ENCODE measurements at regions of chr11 and their contacts with region 1.

Region 1: DNA sequence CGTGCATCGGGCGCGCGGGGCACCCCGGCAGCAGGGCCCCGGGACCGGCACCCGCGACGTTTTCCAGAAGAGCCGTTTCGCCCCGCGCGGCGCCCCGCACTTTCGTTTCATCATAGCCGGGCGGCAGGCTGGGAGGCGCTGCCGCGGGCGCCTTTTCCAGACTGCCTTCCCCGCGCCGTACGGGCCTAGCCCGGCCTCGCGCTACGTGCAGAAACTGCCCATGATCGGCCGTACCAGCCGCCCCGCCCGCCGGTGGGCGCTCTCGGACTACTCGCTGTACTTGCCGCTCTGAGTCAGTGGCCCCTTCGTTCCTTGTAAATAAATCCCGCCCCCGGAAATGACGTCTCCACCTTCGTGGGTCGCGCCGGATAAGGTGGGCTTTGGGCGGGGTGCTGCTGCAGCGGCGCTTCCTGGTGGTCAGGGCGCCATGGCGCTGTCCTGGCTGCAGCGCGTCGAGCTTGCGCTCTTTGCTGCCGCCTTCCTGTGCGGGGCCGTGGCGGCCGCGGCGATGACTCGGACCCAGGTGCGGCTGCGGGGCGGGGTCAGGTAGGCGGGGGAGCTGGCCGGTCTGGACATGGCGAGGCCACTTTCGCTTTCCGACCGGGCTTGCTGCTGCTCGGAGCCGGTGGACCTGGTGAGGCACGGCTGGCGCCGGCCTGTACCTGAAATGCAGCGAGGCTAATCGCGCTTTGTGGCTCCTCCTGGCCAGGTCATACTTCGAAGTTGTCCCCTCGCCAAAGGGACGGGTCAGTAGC is at the start of gene TMEM179B:
- DNase-seq: peak; percentile 98
- H3K4me3 Mint-ChIP-seq: peak within 1 kb of the TSS; percentile 90
- H3K27ac Mint-ChIP-seq: peak within 1 kb of the TSS; percentile 93
- H3K4me1 Mint-ChIP-seq: peaks cover 15% of the 10 kb centered on the region
- H3K27me3 Mint-ChIP-seq: no peaks in the 10 kb centered on the region
- CTCF ChIP-seq: peak; percentile 40
- total RNA-seq, gene TMEM179B: 45.1 and 47.8 TPM in 2 replicates

Region 2: DNA sequence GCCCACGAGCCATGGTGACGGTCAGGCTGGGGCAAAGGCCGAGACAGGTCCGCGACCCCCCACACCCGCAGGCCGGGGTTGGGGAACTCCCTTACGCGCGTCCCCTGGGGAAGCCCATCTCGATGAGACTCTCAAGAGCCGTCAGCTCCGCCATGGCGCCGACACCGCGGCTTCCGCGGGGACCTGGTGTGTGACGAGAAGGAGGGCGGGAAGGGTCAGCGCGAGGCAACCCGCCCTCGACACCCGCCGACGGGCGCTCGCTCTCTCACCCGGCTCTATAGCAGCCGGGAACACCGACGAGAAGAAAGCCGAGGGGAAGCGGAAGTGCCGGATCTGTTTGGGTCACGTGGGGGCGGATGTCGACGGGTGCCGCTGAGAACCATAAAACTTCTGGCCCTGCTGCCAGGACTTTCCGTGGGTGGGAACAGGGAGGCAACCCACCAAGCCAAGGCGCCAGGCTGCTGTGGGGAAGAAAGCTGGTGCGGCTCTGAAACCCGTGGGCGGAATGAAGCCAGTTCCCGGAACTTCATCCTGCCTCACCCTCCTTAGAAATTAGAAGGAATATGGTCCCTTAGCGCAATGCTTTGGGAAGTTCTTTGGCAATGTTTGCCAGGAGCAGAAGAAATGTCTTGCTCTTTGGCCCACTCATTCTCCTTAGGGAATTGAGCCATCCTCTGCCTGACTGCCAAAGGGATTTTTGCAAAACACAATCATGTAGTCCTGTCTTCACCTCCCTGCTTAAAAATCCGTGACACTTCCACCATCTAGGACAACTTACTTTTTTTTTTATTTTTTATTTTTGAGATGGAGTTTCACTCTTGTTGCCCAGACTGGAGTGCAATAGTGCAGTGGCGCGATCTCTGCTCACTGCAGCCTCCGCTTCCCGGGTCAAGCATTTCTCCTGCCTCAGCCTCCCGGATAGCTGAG is 108.1 kb before region 1 on chr11 and contains the start of gene UBXN1:
- CTCF ChIA-PET with region 1: interaction called, 12 read pairs
- POLR2A ChIA-PET with region 1: interaction called, 11 read pairs
- intact Hi-C with region 1: no loop called
- DNase-seq: peak; percentile 89
- H3K4me3 Mint-ChIP-seq: peak within 1 kb of the TSS; percentile 72
- H3K27ac Mint-ChIP-seq: peak within 1 kb of the TSS; percentile 94
- H3K4me1 Mint-ChIP-seq: peaks cover 22% of the 10 kb centered on the region
- H3K27me3 Mint-ChIP-seq: no peaks in the 10 kb centered on the region
- CTCF ChIP-seq: no peak
- total RNA-seq, gene UBXN1: 146 and 153 TPM in 2 replicates

Region 3: GRCh38 chr11:62753736-62754603 is 33.2 kb before region 1 on chr11 and contains the start of gene ZBTB3:
- CTCF ChIA-PET with region 1: interaction called, 8 read pairs
- POLR2A ChIA-PET with region 1: interaction called, 53 read pairs
- intact Hi-C with region 1: no loop called
- DNase-seq: peak; percentile 100
- H3K4me3 Mint-ChIP-seq: peak within 1 kb of the TSS; percentile 98
- H3K27ac Mint-ChIP-seq: peak within 1 kb of the TSS; percentile 96
- H3K4me1 Mint-ChIP-seq: peaks cover 3% of the 10 kb centered on the region
- H3K27me3 Mint-ChIP-seq: no peaks in the 10 kb centered on the region
- CTCF ChIP-seq: no peak
- total RNA-seq, gene ZBTB3: 7.1 and 11.6 TPM in 2 replicates

Region 4: DNA sequence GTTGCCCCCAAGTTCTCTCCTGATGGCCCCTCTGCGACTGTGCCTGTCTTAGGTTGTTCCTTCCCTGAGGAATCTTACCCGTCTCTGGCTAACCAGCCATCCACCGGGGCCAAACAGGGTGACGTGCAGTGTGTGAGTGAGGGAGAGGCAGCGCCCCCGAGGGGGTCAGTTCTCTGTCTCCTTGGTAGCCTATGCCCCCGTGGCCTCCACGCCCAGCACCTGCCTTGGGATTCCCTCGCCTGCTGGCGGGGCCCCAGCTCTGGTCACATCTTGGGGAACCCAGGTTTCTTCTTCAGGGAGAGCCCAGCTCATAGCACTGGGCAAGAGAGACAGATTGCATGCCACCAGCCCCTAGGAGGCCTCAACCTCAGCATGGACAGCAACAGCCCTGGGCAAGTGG is 12.3 kb after region 1 on chr11:
- CTCF ChIA-PET with region 1: interaction called, 11 read pairs
- POLR2A ChIA-PET with region 1: interaction called, 163 read pairs
- intact Hi-C with region 1: no loop called
- DNase-seq: no peak
- H3K4me3 Mint-ChIP-seq: no peak overlapping the region
- H3K27ac Mint-ChIP-seq: no peak overlapping the region
- H3K4me1 Mint-ChIP-seq: peaks cover 8% of the 10 kb centered on the region
- H3K27me3 Mint-ChIP-seq: no peaks in the 10 kb centered on the region
- CTCF ChIP-seq: no peak

Region 5: DNA sequence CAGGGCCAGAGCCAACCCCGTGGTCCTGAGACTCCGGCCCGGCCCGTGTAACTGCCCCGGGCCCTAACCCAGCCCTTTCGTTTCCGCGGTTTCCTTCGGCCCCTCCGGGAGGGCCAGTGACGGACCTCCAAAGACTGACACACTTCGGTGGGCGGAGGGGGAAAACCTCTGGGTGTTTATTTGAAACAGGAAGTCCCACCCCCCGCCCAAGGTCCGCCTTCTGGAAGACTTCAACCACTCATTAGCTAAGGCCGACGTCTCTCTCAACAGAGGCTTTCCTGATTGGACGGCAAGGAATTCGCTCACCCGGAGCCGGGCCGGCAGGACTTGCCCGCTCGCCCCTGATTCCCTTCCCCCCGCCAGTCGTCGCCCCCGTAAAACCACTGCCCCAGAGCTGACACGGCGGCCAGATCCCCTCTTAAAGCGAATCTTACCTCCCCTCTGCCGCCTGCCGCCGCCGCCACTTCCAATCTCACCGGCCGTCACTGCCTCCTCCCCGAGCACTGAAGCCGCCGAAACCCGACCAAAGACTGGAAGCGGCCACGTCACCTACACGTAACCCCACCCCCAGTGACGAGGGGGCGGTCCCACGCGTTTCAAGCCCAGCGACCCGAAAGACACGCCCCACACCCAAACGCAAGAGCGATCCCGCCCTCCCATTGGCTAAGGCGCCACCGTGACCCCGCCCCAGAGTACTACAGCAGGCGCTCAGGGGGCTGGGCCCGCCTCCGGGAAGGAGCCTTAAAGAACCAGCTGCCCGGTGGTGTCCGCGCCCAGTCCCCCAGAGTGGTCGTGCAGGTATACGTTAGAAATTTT is 44.5 kb after region 1 on chr11 and contains the start of gene STX5:
- CTCF ChIA-PET with region 1: interaction called, 6 read pairs
- POLR2A ChIA-PET with region 1: interaction called, 48 read pairs
- intact Hi-C with region 1: no loop called
- DNase-seq: peak; percentile 98
- H3K4me3 Mint-ChIP-seq: peak within 1 kb of the TSS; percentile 89
- H3K27ac Mint-ChIP-seq: peak within 1 kb of the TSS; percentile 99
- H3K4me1 Mint-ChIP-seq: peaks cover 31% of the 10 kb centered on the region
- H3K27me3 Mint-ChIP-seq: no peaks in the 10 kb centered on the region
- CTCF ChIP-seq: no peak
- total RNA-seq, gene STX5: 71.8 and 72.0 TPM in 2 replicates

Region 6: GRCh38 chr11:62860835-62861563 is 73.8 kb after region 1 on chr11:
- CTCF ChIA-PET with region 1: interaction called, 47 read pairs
- POLR2A ChIA-PET with region 1: interaction called, 148 read pairs
- intact Hi-C with region 1: loop called (anchors 1 kb)
- DNase-seq: no peak
- H3K4me3 Mint-ChIP-seq: no peak overlapping the region
- H3K27ac Mint-ChIP-seq: no peak overlapping the region
- H3K4me1 Mint-ChIP-seq: peaks cover 23% of the 10 kb centered on the region
- H3K27me3 Mint-ChIP-seq: no peaks in the 10 kb centered on the region
- CTCF ChIP-seq: no peak

Measured in MCF 10A (cell line).